Heart right ventricle (tissue), 16 donors: ENCODE measurements at regions of chr1 and their contacts with region 1.

Region 1: DNA sequence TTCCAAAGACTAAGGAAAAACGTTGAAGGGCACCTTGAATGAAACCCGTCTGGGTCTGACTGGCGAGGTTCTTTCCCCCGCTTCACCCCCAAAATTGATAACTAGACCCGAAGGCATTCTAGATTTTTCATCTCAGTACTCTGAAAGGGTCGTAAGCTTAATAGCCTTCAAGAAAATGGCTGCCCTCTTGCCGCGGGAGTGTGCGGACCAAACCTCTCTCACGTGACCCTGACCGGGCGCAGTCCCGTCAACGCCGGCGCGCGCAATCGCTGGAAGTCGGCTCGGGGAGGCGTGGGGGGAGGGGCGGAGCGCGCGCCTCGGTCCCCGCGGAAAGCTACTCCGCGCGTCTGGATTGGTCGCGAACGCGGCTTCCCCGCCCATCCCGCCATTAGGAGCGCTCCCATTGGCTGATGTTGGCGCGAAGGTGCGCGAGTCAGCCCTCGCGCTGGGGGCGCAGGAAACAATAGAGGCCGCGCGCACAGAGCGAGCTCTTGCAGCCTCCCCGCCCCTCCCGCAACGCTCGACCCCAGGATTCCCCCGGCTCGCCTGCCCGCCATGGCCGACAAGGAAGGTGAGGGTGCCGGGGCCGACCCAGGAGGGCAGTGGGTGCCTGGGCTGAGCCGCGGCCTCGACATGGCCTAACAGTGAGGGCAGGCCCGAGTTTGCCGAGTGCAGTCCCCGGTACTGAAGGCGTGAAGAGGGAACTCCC is at the start of gene RBBP4:
- DNase-seq: peak; percentile 97 to 99
- ATAC-seq: peak; percentile 96 to 98 (median 97)
- H3K4me3 ChIP-seq: peak within 1 kb of the TSS; percentile 61 to 95 (median 79)
- H3K27ac ChIP-seq: peak within 1 kb of the TSS; percentile 93 to 100 (median 98)
- H3K4me1 ChIP-seq: peaks cover 3 to 65% (median 37%) of the 10 kb centered on the region in 9 donors
- H3K27me3 ChIP-seq: no peaks in the 10 kb centered on the region
- CTCF ChIP-seq: peak in 2 of 9 donors; percentile 4 to 36
- total RNA-seq, gene RBBP4: 86.6 to 119 (median 110) TPM

Region 2: GRCh38 chr1:32702599-32703478 is 51.9 kb after region 1 on chr1 and contains the start of gene SYNC:
- intact Hi-C with region 1: loop called in 1 of 10 experiments (anchors 5 kb)
- DNase-seq: peak; percentile 54 to 77
- ATAC-seq: peak; percentile 75 to 87 (median 79)
- H3K4me3 ChIP-seq: peak within 1 kb of the TSS; percentile 27 to 82 (median 68)
- H3K27ac ChIP-seq: peak within 1 kb of the TSS; percentile 82 to 96 (median 90)
- H3K4me1 ChIP-seq: peaks cover 6 to 34% (median 30%) of the 10 kb centered on the region in 9 donors
- H3K27me3 ChIP-seq: peaks cover 0 to 28% (median 0%) of the 10 kb centered on the region in 7 donors
- CTCF ChIP-seq: no peak
- total RNA-seq, gene SYNC: 9.9 to 27.8 (median 17.7) TPM